ENCODE measurements at regions of chr1 and their contacts with region 1.

Region 1: DNA sequence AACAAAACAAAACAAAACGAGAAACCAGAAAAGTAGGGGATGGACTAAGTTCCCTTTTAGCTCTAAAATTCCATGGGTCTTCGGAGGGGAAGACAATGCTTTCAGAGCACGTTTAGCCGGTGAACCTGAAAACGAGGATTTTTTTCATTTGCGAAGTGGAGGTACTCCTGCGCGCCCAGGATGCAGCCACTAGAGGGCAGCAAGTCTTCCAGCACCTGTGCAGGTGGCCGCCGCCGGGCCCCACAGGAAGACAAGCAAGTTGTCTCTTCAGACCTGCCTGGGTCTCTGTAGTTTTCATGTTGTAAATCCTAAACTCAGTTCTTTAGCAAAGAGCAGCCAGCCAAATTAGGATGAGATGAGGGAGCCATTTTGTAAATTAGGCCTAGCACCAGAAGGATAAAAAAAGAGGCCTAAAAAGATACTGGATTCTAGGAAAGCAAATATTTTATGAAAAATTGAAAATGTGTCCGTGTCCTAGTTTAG is 17.7 kb upstream of the SNX27 start:
- DNase-seq: peak; percentile 67 to 73
- ATAC-seq: peak in 6 of 8 donors; percentile 55 to 76 (median 62)
- H3K4me3 ChIP-seq: peak overlapping the region in 4 of 10 donors; percentile 15 to 30 (median 16)
- H3K27ac ChIP-seq: no peak overlapping the region
- H3K4me1 ChIP-seq: peaks cover 0 to 12% (median 0%) of the 10 kb centered on the region in 9 donors
- H3K27me3 ChIP-seq: no peaks in the 10 kb centered on the region
- CTCF ChIP-seq: peak; percentile 72 to 95 (median 92)

Region 2: DNA sequence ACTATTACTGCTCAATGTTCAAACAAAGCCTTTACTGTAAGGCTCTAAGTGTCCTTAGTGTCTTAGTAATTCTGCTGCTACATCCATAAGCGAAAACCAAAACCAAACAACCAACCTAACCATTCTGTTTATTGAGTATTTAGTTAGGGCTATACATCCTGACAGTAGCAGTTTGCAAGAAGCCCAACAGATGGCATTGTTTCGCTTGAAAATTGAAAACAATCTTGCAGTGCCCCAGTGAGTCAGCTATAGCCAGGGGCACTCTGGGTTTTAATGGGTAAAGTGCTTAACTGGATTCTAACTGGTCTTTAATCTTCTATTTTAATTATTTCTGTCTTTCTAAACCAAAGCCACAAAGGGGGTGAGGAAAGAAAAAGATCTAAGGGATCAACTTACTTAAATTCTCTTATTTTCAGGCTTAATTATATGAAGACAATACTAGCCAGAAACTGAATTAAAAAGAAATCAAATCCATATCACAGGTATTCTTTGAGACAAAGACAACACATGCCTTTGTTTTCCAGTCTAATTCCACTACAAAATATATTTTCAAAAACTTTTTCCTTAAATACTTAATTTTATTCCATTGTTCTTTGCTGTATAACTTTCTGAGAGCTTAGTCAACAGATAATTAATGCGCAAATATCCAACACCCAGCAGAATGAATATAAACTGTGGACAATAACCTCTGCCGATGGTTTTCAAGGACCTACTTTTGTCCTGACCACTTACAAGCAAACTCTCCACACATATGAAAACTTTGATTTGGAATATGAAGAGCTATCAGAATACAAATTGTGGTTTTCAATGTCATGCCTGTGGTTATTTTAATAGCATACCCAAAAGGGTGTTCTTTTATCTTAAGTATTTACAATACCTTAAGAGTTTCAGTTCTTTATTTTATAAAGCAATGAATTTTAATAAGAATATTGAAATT is 150.1 kb before region 1 on chr1:
- intact Hi-C with region 1: loop called in 1 of 10 experiments (anchors 5 kb)
- DNase-seq: peak in 1 of 2 donors; percentile 64
- ATAC-seq: peak; percentile 62 to 91 (median 88)
- H3K4me3 ChIP-seq: no peak overlapping the region
- H3K27ac ChIP-seq: peak overlapping the region in 1 of 10 donors; percentile 43
- H3K4me1 ChIP-seq: peaks cover 3 to 66% (median 40%) of the 10 kb centered on the region in 9 donors
- H3K27me3 ChIP-seq: no peaks in the 10 kb centered on the region
- CTCF ChIP-seq: peak; percentile 30 to 83 (median 68)